Caco-2 (cell line): ENCODE measurements at regions of chr14 and their contacts with region 1.

Region 1: GRCh38 chr14:53539489-53540126 is 386.5 kb upstream of the DDHD1 start:
- DNase-seq: peak; percentile 82 to 87
- H3K4me3 ChIP-seq: no peak overlapping the region
- H3K4me3 Mint-ChIP-seq: no peak overlapping the region
- H3K27ac Mint-ChIP-seq: peak overlapping the region; percentile 79
- H3K4me1 ChIP-seq: peaks cover 42% of the 10 kb centered on the region
- H3K4me1 Mint-ChIP-seq: peaks cover 20% of the 10 kb centered on the region
- H3K27me3 ChIP-seq: no peaks in the 10 kb centered on the region
- H3K27me3 Mint-ChIP-seq: no peaks in the 10 kb centered on the region
- CTCF ChIP-seq: peak; percentile 75 to 86

Region 2: GRCh38 chr14:53432378-53432802 is 107.2 kb before region 1 on chr14:
- CTCF ChIA-PET with region 1: interaction called, 3 read pairs
- POLR2A ChIA-PET with region 1: no interaction called
- intact Hi-C with region 1: loop called (anchors 1 kb)
- DNase-seq: peak; percentile 70 to 77
- H3K4me3 ChIP-seq: no peak overlapping the region
- H3K4me3 Mint-ChIP-seq: no peak overlapping the region
- H3K27ac Mint-ChIP-seq: no peak overlapping the region
- H3K4me1 ChIP-seq: peaks cover 26% of the 10 kb centered on the region
- H3K4me1 Mint-ChIP-seq: peaks cover 13% of the 10 kb centered on the region
- H3K27me3 ChIP-seq: no peaks in the 10 kb centered on the region
- H3K27me3 Mint-ChIP-seq: no peaks in the 10 kb centered on the region
- CTCF ChIP-seq: peak; percentile 76 to 78

Region 3: DNA sequence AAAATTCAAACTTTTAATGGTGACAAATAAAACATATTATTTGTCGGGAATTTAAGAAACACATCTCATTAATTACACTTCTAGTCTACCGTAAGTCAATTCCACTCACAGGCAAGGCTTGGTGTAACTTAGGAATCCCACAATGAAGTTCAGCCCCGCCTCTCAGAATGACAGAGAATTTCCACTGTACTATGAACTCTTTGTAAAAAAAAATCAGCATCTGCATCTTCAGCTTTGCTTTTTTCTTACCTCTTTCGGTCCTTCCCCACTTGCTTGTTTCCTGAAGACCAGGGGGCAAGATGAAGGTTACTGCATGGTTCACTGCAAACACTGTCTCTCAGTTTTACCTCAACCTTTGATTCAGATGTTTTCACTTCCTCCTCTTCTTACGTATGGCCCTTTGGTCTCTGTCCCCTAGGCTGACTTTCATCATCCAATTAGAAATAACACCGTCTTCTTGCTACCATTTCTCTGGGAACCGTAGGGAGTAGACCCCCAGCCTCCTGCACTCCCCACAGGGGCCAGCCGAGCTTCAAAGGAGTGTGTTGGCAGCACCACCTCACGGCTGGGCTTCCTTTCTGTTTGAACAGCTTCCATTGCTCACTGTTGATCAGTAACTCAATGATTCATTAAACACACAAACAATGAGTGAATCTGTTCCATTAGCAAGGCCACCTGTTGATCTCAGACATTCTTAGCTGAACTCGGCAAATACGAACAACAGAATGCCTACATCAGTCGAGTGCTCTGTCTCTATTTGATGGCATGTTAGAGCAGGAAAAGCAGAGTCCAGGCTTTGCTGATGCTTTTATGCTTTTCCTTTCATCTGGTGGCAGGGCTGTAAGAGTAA is 74.0 kb after region 1 on chr14:
- CTCF ChIA-PET with region 1: no interaction called
- POLR2A ChIA-PET with region 1: interaction called, 3 read pairs
- intact Hi-C with region 1: loop called (anchors 1 kb)
- DNase-seq: peak; percentile 89 to 91
- H3K4me3 ChIP-seq: peak overlapping the region; percentile 41
- H3K4me3 Mint-ChIP-seq: peak overlapping the region; percentile 83
- H3K27ac Mint-ChIP-seq: peak overlapping the region; percentile 98
- H3K4me1 ChIP-seq: peaks cover 56% of the 10 kb centered on the region
- H3K4me1 Mint-ChIP-seq: peaks cover 17% of the 10 kb centered on the region
- H3K27me3 ChIP-seq: no peaks in the 10 kb centered on the region
- H3K27me3 Mint-ChIP-seq: no peaks in the 10 kb centered on the region
- CTCF ChIP-seq: peak in 1 of 2 experiments; percentile 32

Region 4: DNA sequence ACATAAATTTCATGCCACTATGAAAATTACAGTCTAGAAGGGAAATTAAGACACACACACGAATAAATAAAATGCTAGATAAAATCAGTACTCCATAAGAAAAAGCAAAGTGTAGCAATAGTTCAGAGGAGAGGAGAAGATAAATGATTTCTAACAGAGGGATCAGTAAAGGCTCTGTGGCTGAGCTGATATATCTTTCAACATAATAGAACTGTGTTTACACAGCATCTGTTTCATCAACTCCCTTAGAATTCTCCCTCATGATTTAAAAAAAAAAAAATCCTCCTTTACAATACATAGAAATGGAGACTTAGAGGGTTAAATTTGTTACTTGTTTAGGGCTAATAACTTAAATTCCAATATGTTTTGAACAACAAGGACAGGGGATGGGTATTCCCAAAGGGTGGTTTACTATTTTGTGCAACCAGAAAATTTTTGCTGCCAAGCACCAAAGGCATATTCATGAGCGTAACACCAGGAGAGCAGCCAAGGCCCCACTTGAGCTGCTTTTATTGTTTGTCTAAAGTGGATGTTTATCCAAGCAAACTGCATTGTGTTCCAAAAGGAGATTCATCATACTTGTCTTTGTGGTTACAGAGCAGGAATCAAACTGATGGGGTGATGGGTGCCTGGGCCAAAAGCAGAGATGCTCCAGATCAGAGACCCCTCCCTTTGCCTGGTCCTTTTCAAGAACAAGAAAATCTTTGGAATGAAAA is 254.3 kb after region 1 on chr14:
- CTCF ChIA-PET with region 1: no interaction called
- POLR2A ChIA-PET with region 1: no interaction called
- intact Hi-C with region 1: loop called (anchors 1 kb)
- DNase-seq: no peak
- H3K4me3 ChIP-seq: no peak overlapping the region
- H3K4me3 Mint-ChIP-seq: no peak overlapping the region
- H3K27ac Mint-ChIP-seq: no peak overlapping the region
- H3K4me1 ChIP-seq: no peaks in the 10 kb centered on the region
- H3K4me1 Mint-ChIP-seq: no peaks in the 10 kb centered on the region
- H3K27me3 ChIP-seq: no peaks in the 10 kb centered on the region
- H3K27me3 Mint-ChIP-seq: no peaks in the 10 kb centered on the region
- CTCF ChIP-seq: no peak

Region 5: DNA sequence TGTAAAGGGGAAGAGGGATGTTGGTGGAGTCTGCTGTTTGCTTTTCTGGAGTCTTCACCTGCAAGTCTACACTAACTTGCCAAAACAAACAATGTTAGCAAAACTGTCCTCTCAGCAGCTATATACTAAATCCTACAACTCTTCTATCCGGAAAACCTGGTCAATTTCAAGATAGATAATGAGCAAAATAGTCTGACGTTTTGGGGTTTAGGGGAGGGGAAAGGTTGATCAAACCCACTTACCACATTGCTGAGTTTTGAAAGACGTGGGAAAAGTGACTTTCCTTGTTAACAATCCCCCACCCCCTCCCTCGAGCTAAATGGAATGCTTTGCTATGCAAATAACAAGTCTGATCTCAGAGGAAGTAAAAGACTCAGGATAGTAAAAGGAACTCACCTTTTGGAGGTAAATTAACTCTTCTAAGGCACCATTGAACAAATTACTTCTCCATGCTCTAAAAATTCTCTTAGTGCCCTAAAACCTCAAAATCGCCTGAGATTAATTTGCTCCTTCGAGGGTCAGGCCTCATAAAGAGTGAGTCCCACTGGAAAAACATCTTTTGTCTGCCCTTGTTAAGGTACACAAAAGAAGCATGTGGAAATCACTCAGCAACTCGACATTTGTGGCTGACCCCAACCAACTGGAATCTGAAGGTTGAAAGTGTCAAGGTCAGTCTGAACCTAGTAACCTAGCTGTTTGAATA is 403.6 kb after region 1 on chr14:
- CTCF ChIA-PET with region 1: no interaction called
- POLR2A ChIA-PET with region 1: no interaction called
- intact Hi-C with region 1: loop called (anchors 5 kb)
- DNase-seq: peak in 1 of 2 experiments; percentile 40
- H3K4me3 ChIP-seq: no peak overlapping the region
- H3K4me3 Mint-ChIP-seq: peak overlapping the region; percentile 68
- H3K27ac Mint-ChIP-seq: peak overlapping the region; percentile 88
- H3K4me1 ChIP-seq: peaks cover 22% of the 10 kb centered on the region
- H3K4me1 Mint-ChIP-seq: peaks cover 44% of the 10 kb centered on the region
- H3K27me3 ChIP-seq: no peaks in the 10 kb centered on the region
- H3K27me3 Mint-ChIP-seq: no peaks in the 10 kb centered on the region
- CTCF ChIP-seq: no peak

Region 6: DNA sequence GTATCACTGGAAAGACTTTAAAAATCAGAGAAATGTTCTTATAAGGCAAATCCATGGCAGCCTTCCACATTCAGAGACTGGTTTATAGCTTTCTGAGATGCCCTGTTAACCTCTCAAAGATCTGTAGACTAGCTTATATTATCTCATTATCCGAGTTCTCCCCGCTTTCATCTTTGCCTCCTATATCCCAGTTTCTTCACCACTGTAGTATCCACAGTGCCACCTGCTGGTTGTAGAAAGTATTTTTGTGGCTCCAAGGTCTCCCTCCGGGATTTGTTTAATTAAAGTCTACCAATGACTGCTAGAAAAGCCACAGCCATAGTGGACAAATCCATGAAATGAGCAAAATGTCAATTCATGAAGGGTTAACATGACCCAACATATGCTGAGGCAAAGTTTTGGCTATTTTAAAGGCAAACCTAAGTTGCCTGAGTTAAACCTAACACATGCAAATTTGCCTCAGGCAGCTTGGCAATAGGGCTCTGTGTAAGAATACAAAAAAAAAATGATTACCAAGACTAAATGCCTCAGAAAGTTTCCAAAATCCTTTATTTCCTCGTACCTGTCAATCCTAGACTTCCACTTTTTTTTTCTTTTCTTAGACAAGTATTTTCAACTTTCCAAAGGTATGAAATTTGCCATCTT is 635.8 kb after region 1 on chr14:
- CTCF ChIA-PET with region 1: no interaction called
- POLR2A ChIA-PET with region 1: no interaction called
- intact Hi-C with region 1: loop called (anchors 1 kb)
- DNase-seq: peak; percentile 76 to 83
- H3K4me3 ChIP-seq: no peak overlapping the region
- H3K4me3 Mint-ChIP-seq: no peak overlapping the region
- H3K27ac Mint-ChIP-seq: no peak overlapping the region
- H3K4me1 ChIP-seq: peaks cover 47% of the 10 kb centered on the region
- H3K4me1 Mint-ChIP-seq: peaks cover 33% of the 10 kb centered on the region
- H3K27me3 ChIP-seq: no peaks in the 10 kb centered on the region
- H3K27me3 Mint-ChIP-seq: no peaks in the 10 kb centered on the region
- CTCF ChIP-seq: peak; percentile 72 to 78

Region 7: GRCh38 chr14:54338696-54339317 is 799.2 kb after region 1 on chr14:
- CTCF ChIA-PET with region 1: interaction called, 5 read pairs
- POLR2A ChIA-PET with region 1: no interaction called
- intact Hi-C with region 1: loop called (anchors 2 kb)
- DNase-seq: peak in 1 of 2 experiments; percentile 35
- H3K4me3 ChIP-seq: no peak overlapping the region
- H3K4me3 Mint-ChIP-seq: no peak overlapping the region
- H3K27ac Mint-ChIP-seq: no peak overlapping the region
- H3K4me1 ChIP-seq: no peaks in the 10 kb centered on the region
- H3K4me1 Mint-ChIP-seq: peaks cover 13% of the 10 kb centered on the region
- H3K27me3 ChIP-seq: no peaks in the 10 kb centered on the region
- H3K27me3 Mint-ChIP-seq: no peaks in the 10 kb centered on the region
- CTCF ChIP-seq: peak; percentile 27 to 70